ENCODE measurements at regions of chr19 and their contacts with region 1.

Region 1: GRCh38 chr19:48858984-48859710 is 9.3 kb downstream of the PLEKHA4 start:
- DNase-seq: peak; percentile 92
- ATAC-seq: peak; percentile 92
- H3K4me3 Mint-ChIP-seq: peak overlapping the region; percentile 94
- H3K27ac Mint-ChIP-seq: peak overlapping the region; percentile 93
- H3K4me1 Mint-ChIP-seq: peaks cover 7% of the 10 kb centered on the region
- H3K27me3 Mint-ChIP-seq: no peaks in the 10 kb centered on the region

Region 2: GRCh38 chr19:48698046-48698445 is 161.1 kb before region 1 on chr19:
- CTCF ChIA-PET with region 1: no interaction called
- POLR2A ChIA-PET with region 1: no interaction called
- intact Hi-C with region 1: no loop called
- DNase-seq: no peak
- ATAC-seq: peak; percentile 33
- H3K4me3 Mint-ChIP-seq: no peak overlapping the region
- H3K27ac Mint-ChIP-seq: no peak overlapping the region
- H3K4me1 Mint-ChIP-seq: peaks cover 10% of the 10 kb centered on the region
- H3K27me3 Mint-ChIP-seq: peaks cover 11% of the 10 kb centered on the region

Region 3: DNA sequence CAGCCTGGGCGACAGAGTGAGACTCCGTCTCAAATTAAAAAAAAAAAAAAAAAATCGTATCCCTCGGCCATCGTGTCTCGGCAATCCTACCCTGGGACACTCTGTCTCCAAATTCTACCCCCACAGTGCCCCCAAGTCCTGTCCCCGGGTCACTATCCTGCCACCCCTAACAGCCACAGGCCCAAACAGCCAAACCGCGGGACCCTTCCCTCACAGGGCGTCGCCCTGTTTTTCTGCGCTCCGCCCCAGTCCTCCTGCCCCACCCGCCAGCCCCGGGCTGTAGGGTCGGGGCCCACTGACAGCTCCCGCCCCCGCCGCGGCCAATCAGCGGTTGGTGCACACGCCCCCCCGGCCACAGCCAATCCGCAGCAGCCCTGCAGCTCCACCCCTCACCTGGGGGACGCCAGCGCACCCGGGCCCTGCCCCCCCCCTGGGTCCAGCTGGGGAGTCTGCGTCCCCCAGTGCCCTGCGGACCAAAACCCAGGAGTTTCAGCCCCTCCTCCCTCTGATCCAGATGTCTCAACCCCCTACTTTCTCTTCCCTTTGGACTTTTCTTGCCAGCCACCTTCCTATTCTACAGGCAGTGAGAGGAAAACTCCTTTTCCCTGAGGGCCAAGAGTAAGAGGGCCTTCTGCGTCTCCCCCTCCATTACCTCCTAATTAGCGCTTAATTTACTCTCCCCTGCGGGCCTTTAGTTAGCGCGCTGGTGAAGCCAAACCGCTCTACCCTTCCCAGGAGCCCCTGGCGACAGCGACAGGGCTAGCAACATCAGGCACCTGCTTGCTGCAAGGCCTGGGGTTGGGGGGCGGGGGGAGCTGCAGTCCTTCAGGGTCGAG is 46.8 kb before region 1 on chr19:
- CTCF ChIA-PET with region 1: no interaction called
- POLR2A ChIA-PET with region 1: no interaction called
- intact Hi-C with region 1: loop called in 1 of 2 experiments (anchors 1 kb)
- DNase-seq: peak; percentile 78
- ATAC-seq: peak; percentile 40
- H3K4me3 Mint-ChIP-seq: peak overlapping the region; percentile 85
- H3K27ac Mint-ChIP-seq: peak overlapping the region; percentile 37
- H3K4me1 Mint-ChIP-seq: peaks cover 29% of the 10 kb centered on the region
- H3K27me3 Mint-ChIP-seq: no peaks in the 10 kb centered on the region

Measured in activated CD4-positive, alpha-beta T cell treated with anti-CD3 and anti-CD28 coated beads for 36 hours (primary cell).